Ovary (tissue), 10 donors: ENCODE measurements at regions of chr4 and their contacts with region 1.

Region 1: DNA sequence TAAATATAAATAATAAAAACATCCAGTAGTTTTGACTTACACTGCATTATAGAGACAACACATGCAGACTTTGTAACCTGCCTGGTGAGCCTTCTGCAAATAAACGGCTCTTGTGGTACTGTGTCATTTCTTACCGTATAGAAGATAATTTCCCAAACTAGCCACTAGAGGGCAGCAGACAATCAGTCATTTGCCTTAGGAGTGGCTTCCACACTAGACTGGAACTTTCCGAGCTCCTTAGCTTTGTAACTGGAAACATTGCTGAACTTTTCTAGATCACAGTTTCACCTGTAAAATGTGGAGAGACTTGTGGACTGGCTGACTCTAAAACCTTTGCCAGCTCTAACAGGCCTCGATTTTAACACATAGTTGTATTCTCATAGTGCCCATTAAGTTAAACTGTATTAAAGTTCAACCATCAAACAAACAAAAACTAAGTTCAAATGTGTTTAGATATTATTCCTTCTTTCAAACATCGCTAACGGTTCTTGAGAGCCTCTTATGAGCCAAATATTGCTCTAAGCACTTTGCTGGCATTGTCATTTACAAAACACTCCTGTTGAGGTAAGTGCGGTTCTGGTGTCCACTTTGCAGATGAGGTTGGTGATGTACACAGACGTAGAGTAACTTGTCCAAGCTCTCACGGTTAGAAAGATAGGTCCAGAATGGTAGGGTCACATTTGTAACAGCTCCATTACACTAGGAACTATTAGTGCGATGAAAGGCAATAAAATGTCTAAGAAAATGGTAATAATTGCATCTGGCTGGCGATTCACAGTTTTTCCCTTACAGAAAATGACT is 345.5 kb downstream of the ANK2 start:
- DNase-seq: peak in 3 of 5 donors; percentile 26 to 63 (median 38)
- H3K4me3 ChIP-seq: no peak overlapping the region
- H3K27ac ChIP-seq: no peak overlapping the region
- H3K4me1 ChIP-seq: no peaks in the 10 kb centered on the region
- H3K27me3 ChIP-seq: no peaks in the 10 kb centered on the region
- CTCF ChIP-seq: peak; percentile 64 to 90 (median 70)
- EP300 ChIP-seq: no peak
- POLR2A ChIP-seq: no peak

Region 2: DNA sequence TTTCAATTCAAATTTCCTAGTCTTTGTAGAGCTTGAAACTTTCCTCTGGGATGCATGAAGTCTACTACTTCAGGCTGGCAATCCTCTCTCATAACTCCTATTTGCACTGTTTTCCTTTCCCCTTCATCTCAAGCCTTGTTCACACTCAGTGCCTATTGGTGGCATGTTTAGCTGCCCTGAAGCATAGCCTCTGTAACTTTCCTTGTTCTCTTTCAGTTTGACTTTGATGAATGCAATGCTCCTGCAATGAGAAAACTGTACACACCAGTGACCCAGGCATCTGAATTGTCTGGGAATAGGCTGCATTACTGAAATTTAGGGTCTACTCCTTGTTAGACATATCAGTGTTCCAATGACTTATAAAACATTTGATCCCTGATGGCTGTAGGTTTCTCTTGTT is 263.8 kb before region 1 on chr4:
- intact Hi-C with region 1: no loop called
- DNase-seq: no peak
- H3K4me3 ChIP-seq: no peak overlapping the region
- H3K27ac ChIP-seq: no peak overlapping the region
- H3K4me1 ChIP-seq: peaks cover 3% of the 10 kb centered on the region
- H3K27me3 ChIP-seq: no peaks in the 10 kb centered on the region
- CTCF ChIP-seq: no peak
- EP300 ChIP-seq: no peak
- POLR2A ChIP-seq: no peak

Region 3: GRCh38 chr4:113547487-113548042 is 152.6 kb after region 1 on chr4:
- intact Hi-C with region 1: loop called in 1 of 4 experiments (anchors 10 kb)
- DNase-seq: peak; percentile 68 to 82 (median 78)
- H3K4me3 ChIP-seq: no peak overlapping the region
- H3K27ac ChIP-seq: no peak overlapping the region
- H3K4me1 ChIP-seq: no peaks in the 10 kb centered on the region
- H3K27me3 ChIP-seq: no peaks in the 10 kb centered on the region
- CTCF ChIP-seq: peak; percentile 79 to 83 (median 82)
- EP300 ChIP-seq: no peak
- POLR2A ChIP-seq: no peak

Region 4: DNA sequence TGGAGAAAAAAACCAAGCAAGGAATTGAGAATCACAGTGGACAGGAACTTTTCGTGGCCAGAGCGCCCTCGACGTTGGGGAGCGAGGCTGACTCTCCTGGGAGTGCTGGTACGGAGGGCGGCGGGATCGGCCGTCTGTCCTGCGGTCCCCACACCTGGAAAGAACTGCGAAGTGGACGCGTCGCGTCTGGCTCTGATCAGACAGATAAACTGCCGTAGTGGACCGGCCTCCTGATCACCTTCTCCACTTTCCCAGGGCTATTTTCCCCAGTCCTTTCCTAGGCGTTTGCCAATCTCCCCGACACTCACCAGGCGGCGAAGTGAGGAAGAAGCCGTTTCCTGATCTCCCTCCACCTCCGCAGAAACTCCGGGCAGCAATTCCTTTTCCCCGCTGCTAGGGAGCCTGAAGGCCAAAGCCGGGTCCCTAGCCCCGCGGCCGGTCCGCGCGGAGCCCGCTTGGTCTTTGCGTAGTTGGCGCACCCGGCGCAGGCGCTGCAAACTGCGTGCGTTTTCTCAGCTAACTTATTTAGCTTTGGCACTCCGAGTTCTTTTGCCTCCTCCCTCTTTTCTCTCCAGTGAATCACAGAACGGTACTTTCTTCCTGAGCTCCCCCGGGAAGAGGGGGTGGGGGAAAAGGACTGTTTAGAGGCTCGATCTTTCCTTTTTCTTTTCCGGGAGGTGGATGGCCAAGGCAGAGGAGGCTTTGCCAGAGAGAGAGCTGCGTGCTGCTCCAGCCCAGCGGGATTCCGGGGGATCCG is 584.4 kb after region 1 on chr4 and contains the start of gene ARSJ:
- intact Hi-C with region 1: loop called in 1 of 4 experiments (anchors 10 kb)
- DNase-seq: peak; percentile 69 to 85 (median 74)
- H3K4me3 ChIP-seq: peak within 1 kb of the TSS; percentile 50
- H3K27ac ChIP-seq: peak within 1 kb of the TSS; percentile 82
- H3K4me1 ChIP-seq: peaks cover 2% of the 10 kb centered on the region
- H3K27me3 ChIP-seq: no peaks in the 10 kb centered on the region
- CTCF ChIP-seq: no peak
- EP300 ChIP-seq: no peak
- POLR2A ChIP-seq: peak; percentile 22
- total RNA-seq, gene ARSJ: 3.9 to 6.7 (median 5.6) TPM